Calu3 (cell line): ENCODE measurements at regions of chr17 and their contacts with region 1.

Region 1: GRCh38 chr17:50534222-50534978 is 1.9 kb downstream of the EPN3 start:
- DNase-seq: peak; percentile 92
- H3K4me3 Mint-ChIP-seq: peak overlapping the region; percentile 85
- H3K27ac Mint-ChIP-seq: peak overlapping the region; percentile 63
- H3K4me1 Mint-ChIP-seq: peaks cover 47% of the 10 kb centered on the region
- H3K27me3 Mint-ChIP-seq: peaks cover 5% of the 10 kb centered on the region
- CTCF ChIP-seq: peak; percentile 96

Region 2: GRCh38 chr17:50501054-50501453 is 33.3 kb before region 1 on chr17:
- CTCF ChIA-PET with region 1: interaction called, 5 read pairs
- intact Hi-C with region 1: loop called (anchors 5 kb)
- DNase-seq: peak; percentile 62
- H3K4me3 Mint-ChIP-seq: no peak overlapping the region
- H3K27ac Mint-ChIP-seq: no peak overlapping the region
- H3K4me1 Mint-ChIP-seq: peaks cover 10% of the 10 kb centered on the region
- H3K27me3 Mint-ChIP-seq: peaks cover 19% of the 10 kb centered on the region
- CTCF ChIP-seq: peak; percentile 55